PC-3 (cell line): ENCODE measurements at regions of chr2 and their contacts with region 1.

Region 1: GRCh38 chr2:30226144-30227032 is 4.9 kb upstream of the LBH start:
- DNase-seq: no peak
- ATAC-seq: no peak
- H3K4me3 ChIP-seq: no peak overlapping the region
- H3K27ac ChIP-seq: no peak overlapping the region
- H3K4me1 ChIP-seq: 0 out of 2 replicates have a peak, but pooled peaks cover under 1% of the 10 kb centered on the region
- H3K27me3 ChIP-seq: peaks cover 13% of the 10 kb centered on the region
- CTCF ChIP-seq: no peak

Region 2: DNA sequence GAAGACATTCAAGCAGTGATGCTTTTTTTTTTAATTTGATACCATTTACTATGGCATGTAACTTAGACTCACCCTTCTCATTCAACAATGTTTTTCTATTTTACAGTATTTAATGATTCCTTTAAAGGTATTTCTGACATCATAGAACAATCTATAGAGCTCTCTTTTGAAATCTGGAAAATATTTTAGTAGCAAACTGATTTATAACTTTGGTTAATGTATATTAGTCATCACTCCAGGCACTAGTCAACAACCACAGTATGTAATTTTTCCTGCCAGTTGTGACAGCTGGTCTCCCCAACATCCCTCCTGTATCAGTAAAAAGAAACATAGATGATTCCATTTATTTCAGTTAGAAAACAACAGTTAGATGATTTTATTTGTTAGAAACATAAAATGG is 343.6 kb after region 1 on chr2:
- CTCF ChIA-PET with region 1: no interaction called
- POLR2A ChIA-PET with region 1: interaction called, 18 read pairs
- intact Hi-C with region 1: no loop called
- DNase-seq: no peak
- ATAC-seq: no peak
- H3K4me3 ChIP-seq: no peak overlapping the region
- H3K27ac ChIP-seq: no peak overlapping the region
- H3K4me1 ChIP-seq: no peaks in the 10 kb centered on the region
- H3K27me3 ChIP-seq: no peaks in the 10 kb centered on the region
- CTCF ChIP-seq: no peak